ENCODE measurements at regions of chr7 and their contacts with region 1.

Region 1: GRCh38 chr7:129417071-129417470 is 17.2 kb upstream of the STRIP2 start:
- DNase-seq: no peak
- H3K4me3 ChIP-seq: no peak overlapping the region
- H3K27ac ChIP-seq: no peak overlapping the region
- H3K4me1 ChIP-seq: no peaks in the 10 kb centered on the region
- CTCF ChIP-seq: no peak

Region 2: DNA sequence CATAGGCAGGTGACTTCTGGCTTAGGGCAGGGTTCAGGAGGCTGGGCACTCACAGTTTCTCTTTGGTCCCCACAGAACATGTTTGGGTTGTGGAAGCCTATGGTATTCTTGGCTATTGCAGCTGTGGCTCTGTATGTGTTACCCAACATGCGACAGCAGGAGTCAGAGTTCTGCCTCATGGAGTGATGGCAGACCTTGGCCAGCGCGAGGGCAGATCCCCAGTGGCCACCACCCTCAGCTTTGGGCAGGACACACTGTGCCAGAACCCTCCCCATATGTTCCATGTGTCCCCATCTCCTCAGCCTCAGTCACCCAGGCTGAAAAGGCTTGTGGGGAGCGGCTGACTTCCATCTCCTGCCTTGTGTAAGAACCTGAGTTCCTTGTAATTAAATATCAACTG is 595.3 kb before region 1 on chr7:
- CTCF ChIA-PET with region 1: no interaction called
- POLR2A ChIA-PET with region 1: no interaction called
- intact Hi-C with region 1: no loop called
- DNase-seq: no peak
- H3K4me3 ChIP-seq: no peak overlapping the region
- H3K27ac ChIP-seq: no peak overlapping the region
- H3K4me1 ChIP-seq: no peaks in the 10 kb centered on the region
- CTCF ChIP-seq: no peak

Region 3: GRCh38 chr7:129698516-129699418 is 281.7 kb after region 1 on chr7:
- CTCF ChIA-PET with region 1: no interaction called
- POLR2A ChIA-PET with region 1: no interaction called
- intact Hi-C with region 1: no loop called
- DNase-seq: no peak
- H3K4me3 ChIP-seq: no peak overlapping the region
- H3K27ac ChIP-seq: no peak overlapping the region
- H3K4me1 ChIP-seq: no peaks in the 10 kb centered on the region
- CTCF ChIP-seq: no peak

Region 4: DNA sequence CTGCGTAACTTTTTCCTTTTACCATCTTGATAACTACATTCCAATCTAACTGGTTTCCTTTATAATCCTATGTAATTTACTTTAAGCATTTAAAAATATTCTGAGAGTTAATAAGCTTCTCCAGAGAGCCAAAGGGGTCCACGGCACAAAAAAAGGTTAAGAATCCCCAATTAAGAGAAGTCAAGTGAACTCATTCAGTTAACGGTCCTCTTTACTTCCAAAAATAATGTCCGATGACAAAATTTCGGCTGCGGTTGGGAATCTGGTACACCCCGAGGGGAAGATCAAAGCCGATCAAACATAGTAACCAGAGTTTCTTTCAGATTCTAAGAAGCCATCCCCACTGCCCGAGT is 633.7 kb after region 1 on chr7:
- CTCF ChIA-PET with region 1: no interaction called
- POLR2A ChIA-PET with region 1: interaction called, 10 read pairs
- intact Hi-C with region 1: no loop called
- DNase-seq: no peak
- H3K4me3 ChIP-seq: peak overlapping the region; percentile 78
- H3K27ac ChIP-seq: peak overlapping the region; percentile 52
- H3K4me1 ChIP-seq: peaks cover 18% of the 10 kb centered on the region
- CTCF ChIP-seq: no peak